Endothelial cell of umbilical vein (primary cell): ENCODE measurements at regions of chr1 and their contacts with region 1.

Region 1: GRCh38 chr1:85307987-85308832 is 31.8 kb upstream of the BCL10 start:
- DNase-seq: peak; percentile 91
- H3K4me3 ChIP-seq: no peak overlapping the region
- H3K27ac ChIP-seq: peak overlapping the region; percentile 44
- H3K4me1 ChIP-seq: peaks cover 21% of the 10 kb centered on the region
- H3K27me3 ChIP-seq: no peaks in the 10 kb centered on the region
- CTCF ChIP-seq: peak; percentile 99
- POLR2A ChIP-seq: no peak

Region 2: DNA sequence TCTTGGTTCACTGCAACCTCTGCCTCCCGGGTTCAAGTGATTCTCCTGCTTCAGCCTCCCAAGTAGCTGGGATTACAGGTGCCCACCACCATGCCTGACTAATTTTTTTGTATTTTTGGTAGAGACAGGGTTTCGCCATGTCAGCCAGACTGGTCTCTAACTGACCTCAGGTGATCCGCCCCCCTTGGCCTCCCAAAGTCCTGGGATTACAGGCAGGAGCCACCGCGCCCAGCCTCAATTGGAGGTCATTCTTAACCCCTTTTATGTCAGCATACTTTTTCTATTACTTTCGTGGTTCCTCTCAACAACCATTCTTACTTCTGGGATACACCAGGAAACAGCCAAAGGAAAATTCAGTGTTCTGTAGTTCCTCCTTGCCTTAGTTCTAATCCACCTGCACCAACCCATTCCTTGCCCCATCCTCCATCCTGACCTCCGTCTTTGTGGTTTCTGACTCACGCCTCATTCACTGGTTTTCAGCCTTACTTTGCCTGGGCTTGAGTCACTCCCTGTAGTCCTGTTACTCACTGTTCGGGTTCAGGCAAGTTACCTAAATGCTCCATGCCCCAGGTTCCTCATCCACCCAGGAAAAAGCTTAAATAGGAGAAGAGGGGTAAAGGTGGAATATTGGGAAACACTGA is 18.9 kb before region 1 on chr1:
- CTCF ChIA-PET with region 1: no interaction called
- POLR2A ChIA-PET with region 1: no interaction called
- dilution Hi-C with region 1: no loop called
- intact Hi-C with region 1: no loop called
- DNase-seq: peak; percentile 70
- H3K4me3 ChIP-seq: no peak overlapping the region
- H3K27ac ChIP-seq: no peak overlapping the region
- H3K4me1 ChIP-seq: peaks cover 16% of the 10 kb centered on the region
- H3K27me3 ChIP-seq: no peaks in the 10 kb centered on the region
- CTCF ChIP-seq: no peak
- POLR2A ChIP-seq: no peak

Region 3: GRCh38 chr1:85321237-85321964 is 13.2 kb after region 1 on chr1:
- CTCF ChIA-PET with region 1: interaction called, 18 read pairs
- POLR2A ChIA-PET with region 1: interaction called, 4 read pairs
- dilution Hi-C with region 1: no loop called
- intact Hi-C with region 1: no loop called
- DNase-seq: peak; percentile 35
- H3K4me3 ChIP-seq: no peak overlapping the region
- H3K27ac ChIP-seq: peak overlapping the region; percentile 100
- H3K4me1 ChIP-seq: peaks cover 79% of the 10 kb centered on the region
- H3K27me3 ChIP-seq: no peaks in the 10 kb centered on the region
- CTCF ChIP-seq: no peak
- POLR2A ChIP-seq: peak; percentile 36

Region 4: DNA sequence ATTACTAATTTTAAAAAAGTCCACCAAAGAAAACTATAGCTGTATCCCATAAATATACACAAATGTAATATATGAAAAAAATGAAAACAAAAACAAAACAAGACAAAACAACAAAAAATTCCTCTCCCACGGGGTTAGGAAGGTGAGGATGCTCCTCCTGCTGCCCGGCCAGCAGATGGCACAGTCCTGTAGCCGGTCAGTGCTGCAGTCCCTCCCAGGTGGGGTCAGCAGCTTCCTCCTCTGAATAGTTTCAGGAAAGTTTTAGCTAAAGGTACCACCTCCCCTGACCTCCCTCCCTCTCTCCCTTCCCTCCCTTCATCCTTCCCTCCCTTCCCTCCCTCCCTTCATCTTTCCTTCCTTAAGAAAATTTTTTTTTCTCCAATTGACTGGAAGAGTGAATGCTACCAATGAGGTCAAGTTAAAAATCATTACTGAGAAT is 36.1 kb after region 1 on chr1:
- CTCF ChIA-PET with region 1: interaction called, 54 read pairs
- POLR2A ChIA-PET with region 1: interaction called, 6 read pairs
- dilution Hi-C with region 1: no loop called
- intact Hi-C with region 1: loop called (anchors 1 kb)
- DNase-seq: no peak
- H3K4me3 ChIP-seq: peak overlapping the region in 1 of 3 experiments; percentile 20
- H3K27ac ChIP-seq: peak overlapping the region; percentile 99
- H3K4me1 ChIP-seq: peaks cover 67% of the 10 kb centered on the region
- H3K27me3 ChIP-seq: no peaks in the 10 kb centered on the region
- CTCF ChIP-seq: peak; percentile 65 to 74
- POLR2A ChIP-seq: peak; percentile 54

Region 5: GRCh38 chr1:85417017-85417416 is 108.8 kb after region 1 on chr1:
- CTCF ChIA-PET with region 1: interaction called, 4 read pairs
- POLR2A ChIA-PET with region 1: no interaction called
- dilution Hi-C with region 1: no loop called
- intact Hi-C with region 1: loop called (anchors 1 kb)
- DNase-seq: peak; percentile 74
- H3K4me3 ChIP-seq: no peak overlapping the region
- H3K27ac ChIP-seq: peak overlapping the region; percentile 61
- H3K4me1 ChIP-seq: peaks cover 30% of the 10 kb centered on the region
- H3K27me3 ChIP-seq: no peaks in the 10 kb centered on the region
- CTCF ChIP-seq: peak in 1 of 2 donors; percentile 47
- POLR2A ChIP-seq: no peak

Region 6: GRCh38 chr1:85502625-85503083 is 194.4 kb after region 1 on chr1:
- CTCF ChIA-PET with region 1: interaction called, 36 read pairs
- POLR2A ChIA-PET with region 1: no interaction called
- dilution Hi-C with region 1: no loop called
- intact Hi-C with region 1: loop called (anchors 1 kb)
- DNase-seq: peak; percentile 87
- H3K4me3 ChIP-seq: no peak overlapping the region
- H3K27ac ChIP-seq: no peak overlapping the region
- H3K4me1 ChIP-seq: no peaks in the 10 kb centered on the region
- H3K27me3 ChIP-seq: no peaks in the 10 kb centered on the region
- CTCF ChIP-seq: peak; percentile 46 to 58
- POLR2A ChIP-seq: no peak

Region 7: DNA sequence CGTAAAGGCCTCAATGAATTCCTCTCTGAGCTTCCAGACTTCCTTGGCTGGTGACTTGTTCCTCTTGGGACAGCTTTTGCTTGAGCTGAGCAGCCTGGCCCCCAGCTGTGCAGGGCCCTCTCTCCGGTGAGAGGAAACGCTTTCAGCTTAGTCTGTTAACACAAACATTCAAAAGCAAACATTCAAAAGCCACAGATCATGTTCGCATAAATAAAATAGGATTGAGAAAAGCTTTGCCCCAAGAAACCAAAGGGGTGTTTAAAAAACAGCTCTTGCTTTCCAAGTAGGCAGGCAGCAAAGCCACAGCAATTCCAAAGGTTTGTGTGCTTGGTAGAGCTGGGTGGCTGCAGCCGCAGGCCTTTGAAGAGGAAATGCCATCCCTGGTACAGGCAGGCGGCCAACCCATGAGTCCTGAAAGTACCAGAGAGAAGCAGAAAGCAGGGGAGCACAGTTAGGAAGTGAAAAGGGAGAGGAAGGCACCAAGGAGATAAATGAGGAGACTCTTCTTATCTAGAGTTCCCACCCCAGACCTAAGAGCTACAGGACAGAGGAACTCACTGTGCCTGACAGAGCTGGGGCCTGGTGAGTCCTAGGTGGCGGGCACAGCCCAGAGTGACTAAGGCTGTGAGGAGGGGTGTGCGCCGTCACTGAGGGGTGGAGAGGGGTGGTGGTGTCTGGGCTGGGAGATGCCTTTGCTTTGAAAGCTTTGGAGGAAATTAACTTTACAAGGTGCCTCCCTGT is 320.8 kb after region 1 on chr1:
- CTCF ChIA-PET with region 1: interaction called, 16 read pairs
- POLR2A ChIA-PET with region 1: no interaction called
- dilution Hi-C with region 1: no loop called
- intact Hi-C with region 1: no loop called
- DNase-seq: peak; percentile 81
- H3K4me3 ChIP-seq: peak overlapping the region in 1 of 3 experiments; percentile 7
- H3K27ac ChIP-seq: peak overlapping the region; percentile 76
- H3K4me1 ChIP-seq: peaks cover 25% of the 10 kb centered on the region
- H3K27me3 ChIP-seq: no peaks in the 10 kb centered on the region
- CTCF ChIP-seq: no peak
- POLR2A ChIP-seq: no peak

Region 8: DNA sequence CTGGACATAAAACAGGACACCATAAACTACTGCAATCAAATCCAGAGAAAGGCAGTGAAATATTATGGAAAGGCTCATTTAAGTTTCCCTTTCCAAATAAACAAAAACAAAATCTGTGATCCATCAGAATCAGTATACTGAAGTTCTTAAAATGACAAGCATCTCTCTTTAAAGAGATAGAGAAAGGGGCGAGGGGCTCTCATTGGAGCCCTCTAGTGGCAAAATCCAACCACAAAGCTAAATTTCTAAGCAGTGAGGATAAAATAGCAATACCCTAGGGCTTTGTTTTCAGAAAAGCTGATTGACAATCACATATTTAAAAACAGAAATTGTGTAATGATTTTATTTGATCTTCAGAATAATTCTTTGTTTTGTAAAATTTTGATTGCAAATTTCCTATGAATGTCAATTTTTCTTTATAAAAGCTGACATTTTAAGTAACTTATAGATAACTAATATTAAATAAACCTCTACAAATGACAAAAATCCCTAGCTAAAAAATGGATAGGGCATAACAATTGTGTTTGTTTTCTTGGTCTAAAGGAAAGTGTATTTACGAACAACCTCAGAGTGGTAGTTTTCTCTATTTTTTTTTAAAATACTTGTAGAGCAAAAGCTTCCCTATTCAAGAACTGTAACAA is 710.2 kb after region 1 on chr1:
- CTCF ChIA-PET with region 1: interaction called, 8 read pairs
- POLR2A ChIA-PET with region 1: no interaction called
- dilution Hi-C with region 1: no loop called
- intact Hi-C with region 1: loop called (anchors 2 kb)
- DNase-seq: peak; percentile 59
- H3K4me3 ChIP-seq: no peak overlapping the region
- H3K27ac ChIP-seq: no peak overlapping the region
- H3K4me1 ChIP-seq: no peaks in the 10 kb centered on the region
- H3K27me3 ChIP-seq: peaks cover 0 to 2% of the 10 kb centered on the region in 2 experiments
- CTCF ChIP-seq: peak; percentile 65 to 70
- POLR2A ChIP-seq: no peak